ENCODE measurements at regions of chr1 and their contacts with region 1.

Region 1: DNA sequence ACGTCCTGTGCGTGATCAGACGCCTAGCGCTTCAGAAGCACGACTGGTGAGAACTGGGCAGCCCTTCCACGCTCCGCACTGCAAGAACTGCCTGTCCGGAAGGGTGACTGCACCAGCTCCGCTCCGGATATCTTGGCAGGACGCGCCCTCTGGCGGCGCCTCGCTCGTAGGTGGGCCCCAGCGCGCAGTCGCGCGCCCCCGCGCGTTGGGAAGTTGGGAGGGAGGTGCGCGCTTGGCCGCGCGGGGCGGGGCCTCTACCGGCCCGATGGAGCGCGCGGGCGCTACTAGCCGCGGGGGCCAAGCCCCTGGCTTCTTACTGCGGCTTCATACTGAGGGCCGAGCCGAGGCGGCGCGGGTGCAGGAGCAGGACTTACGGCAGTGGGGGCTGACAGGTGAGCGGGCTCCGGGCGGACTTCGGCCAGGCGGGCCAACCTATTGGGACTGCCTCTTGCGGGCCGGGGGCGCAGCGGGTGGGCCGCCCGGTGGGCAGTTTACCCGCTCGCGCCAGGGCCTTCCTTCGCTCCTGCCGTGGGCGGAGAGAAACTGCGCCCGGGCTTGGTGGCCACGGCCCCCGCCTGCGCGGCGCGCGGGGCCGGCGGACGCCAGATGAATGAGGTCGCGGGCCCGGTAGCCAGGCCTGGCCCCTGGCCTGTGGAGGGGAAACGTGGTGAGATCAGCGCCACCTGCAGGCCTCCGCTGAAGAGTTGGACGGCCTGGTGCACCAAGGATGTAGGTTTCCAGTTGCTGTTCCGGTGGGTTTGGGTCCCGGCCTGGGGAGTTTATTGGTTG is at the start of gene CHD1L:
- H3K4me3 Mint-ChIP-seq: peak within 1 kb of the TSS; percentile 92
- H3K27ac Mint-ChIP-seq: peak within 1 kb of the TSS; percentile 84
- H3K4me1 Mint-ChIP-seq: peaks cover 37% of the 10 kb centered on the region
- H3K27me3 Mint-ChIP-seq: no peaks in the 10 kb centered on the region

Region 2: GRCh38 chr1:147084273-147085096 is 158.1 kb before region 1 on chr1:
- intact Hi-C with region 1: loop called (anchors 10 kb)
- H3K4me3 Mint-ChIP-seq: peak overlapping the region; percentile 82
- H3K27ac Mint-ChIP-seq: peak overlapping the region; percentile 87
- H3K4me1 Mint-ChIP-seq: peaks cover 34% of the 10 kb centered on the region
- H3K27me3 Mint-ChIP-seq: peaks cover 69% of the 10 kb centered on the region

Region 3: GRCh38 chr1:147172168-147172992 is 70.3 kb before region 1 on chr1 and contains the start of gene PRKAB2:
- intact Hi-C with region 1: loop called (anchors 1 kb)
- H3K4me3 Mint-ChIP-seq: peak within 1 kb of the TSS; percentile 87
- H3K27ac Mint-ChIP-seq: peak within 1 kb of the TSS; percentile 96
- H3K4me1 Mint-ChIP-seq: peaks cover 34% of the 10 kb centered on the region
- H3K27me3 Mint-ChIP-seq: no peaks in the 10 kb centered on the region

Region 4: GRCh38 chr1:147225193-147225730 is 17.4 kb before region 1 on chr1 and contains the start of gene FMO5:
- intact Hi-C with region 1: loop called (anchors 1 kb)
- H3K4me3 Mint-ChIP-seq: peak within 1 kb of the TSS; percentile 93
- H3K27ac Mint-ChIP-seq: peak within 1 kb of the TSS; percentile 99
- H3K4me1 Mint-ChIP-seq: peaks cover 32% of the 10 kb centered on the region
- H3K27me3 Mint-ChIP-seq: no peaks in the 10 kb centered on the region

Region 5: GRCh38 chr1:147273409-147274336 is 31.0 kb after region 1 on chr1:
- intact Hi-C with region 1: no loop called
- H3K4me3 Mint-ChIP-seq: no peak overlapping the region
- H3K27ac Mint-ChIP-seq: no peak overlapping the region
- H3K4me1 Mint-ChIP-seq: no peaks in the 10 kb centered on the region
- H3K27me3 Mint-ChIP-seq: no peaks in the 10 kb centered on the region